SK-N-SH (cell line): ENCODE measurements at regions of chr6 and their contacts with region 1.

Region 1: DNA sequence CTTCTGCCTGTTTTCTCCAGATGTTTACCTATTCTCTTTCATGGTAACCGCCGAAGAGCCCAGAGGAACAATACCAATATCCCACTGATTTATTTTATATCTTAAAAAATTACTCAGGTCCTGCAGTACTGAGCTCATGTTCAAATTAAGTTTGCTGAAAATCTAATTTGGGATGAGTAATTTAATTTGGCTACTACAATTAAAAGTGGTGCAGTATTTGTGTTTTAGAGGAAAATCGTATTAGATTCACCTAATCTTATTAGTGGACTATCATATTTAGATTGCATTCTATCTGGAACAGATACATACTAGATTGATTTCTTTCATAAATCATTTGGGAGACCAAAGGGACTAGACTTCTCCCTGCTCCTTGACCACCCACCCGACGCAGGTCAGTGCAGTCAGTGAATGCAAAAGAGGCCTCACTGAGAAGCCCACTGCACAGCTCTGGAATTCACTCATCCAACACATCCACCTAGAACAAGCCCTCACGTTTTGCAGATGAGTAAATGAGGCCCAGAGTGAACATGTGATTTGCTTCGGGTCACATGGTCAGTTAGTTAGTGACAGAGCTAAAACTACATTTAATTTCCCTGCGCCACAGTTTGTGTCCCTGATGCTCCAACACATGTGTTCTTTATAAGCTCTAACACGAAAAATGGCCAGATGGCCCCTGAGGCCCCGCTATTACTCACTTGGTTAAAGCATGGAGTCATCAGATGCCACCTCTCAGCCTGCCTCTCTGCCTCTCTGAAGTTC is 101.8 kb downstream of the TRERF1 start:
- DNase-seq: peak; percentile 77
- H3K4me3 ChIP-seq: no peak overlapping the region
- H3K27ac ChIP-seq: peak overlapping the region; percentile 57 to 73; a peak in 3 of 4 replicates
- H3K4me1 ChIP-seq: peaks cover 0 to 28% of the 10 kb centered on the region in 2 experiments; a peak in 3 of 4 replicates
- H3K27me3 ChIP-seq: no peaks in the 10 kb centered on the region
- CTCF ChIP-seq: no peak
- EP300 ChIP-seq: peak in 1 of 2 experiments; percentile 70; a peak in 2 of 4 replicates
- RAD21 ChIP-seq: peak; percentile 6; the same call in 1 of the 2 replicates

Region 2: GRCh38 chr6:42390228-42390934 is 40.4 kb after region 1 on chr6:
- CTCF ChIA-PET with region 1: no interaction called
- POLR2A ChIA-PET with region 1: no interaction called
- DNase-seq: no peak
- H3K4me3 ChIP-seq: no peak overlapping the region
- H3K27ac ChIP-seq: no peak overlapping the region
- H3K4me1 ChIP-seq: no peaks in the 10 kb centered on the region
- H3K27me3 ChIP-seq: no peaks in the 10 kb centered on the region
- CTCF ChIP-seq: no peak
- EP300 ChIP-seq: no peak
- RAD21 ChIP-seq: no peak

Region 3: GRCh38 chr6:42453031-42453653 is 103.2 kb after region 1 on chr6:
- CTCF ChIA-PET with region 1: no interaction called
- POLR2A ChIA-PET with region 1: interaction called, 11 read pairs
- DNase-seq: peak; percentile 92
- H3K4me3 ChIP-seq: peak overlapping the region; percentile 95 to 100
- H3K27ac ChIP-seq: peak overlapping the region; percentile 90 to 96
- H3K4me1 ChIP-seq: peaks cover 8 to 17% of the 10 kb centered on the region in 2 experiments; a peak in 3 of 4 replicates
- H3K27me3 ChIP-seq: no peaks in the 10 kb centered on the region
- CTCF ChIP-seq: no peak
- EP300 ChIP-seq: no peak; a peak in 2 of 4 replicates
- RAD21 ChIP-seq: no peak